ENCODE measurements at regions of chr21 and their contacts with region 1.

Region 1: GRCh38 chr21:33075128-33075527 is 5.2 kb downstream of the OLIG1 start:
- DNase-seq: no peak
- H3K4me3 ChIP-seq: no peak overlapping the region
- H3K27ac ChIP-seq: no peak overlapping the region
- H3K4me1 ChIP-seq: no peaks in the 10 kb centered on the region
- CTCF ChIP-seq: no peak

Region 2: GRCh38 chr21:32958288-32959002 is 116.7 kb before region 1 on chr21:
- CTCF ChIA-PET with region 1: interaction called, 10 read pairs
- POLR2A ChIA-PET with region 1: no interaction called
- intact Hi-C with region 1: no loop called
- DNase-seq: no peak
- H3K4me3 ChIP-seq: no peak overlapping the region
- H3K27ac ChIP-seq: no peak overlapping the region
- H3K4me1 ChIP-seq: no peaks in the 10 kb centered on the region
- CTCF ChIP-seq: no peak

Region 3: DNA sequence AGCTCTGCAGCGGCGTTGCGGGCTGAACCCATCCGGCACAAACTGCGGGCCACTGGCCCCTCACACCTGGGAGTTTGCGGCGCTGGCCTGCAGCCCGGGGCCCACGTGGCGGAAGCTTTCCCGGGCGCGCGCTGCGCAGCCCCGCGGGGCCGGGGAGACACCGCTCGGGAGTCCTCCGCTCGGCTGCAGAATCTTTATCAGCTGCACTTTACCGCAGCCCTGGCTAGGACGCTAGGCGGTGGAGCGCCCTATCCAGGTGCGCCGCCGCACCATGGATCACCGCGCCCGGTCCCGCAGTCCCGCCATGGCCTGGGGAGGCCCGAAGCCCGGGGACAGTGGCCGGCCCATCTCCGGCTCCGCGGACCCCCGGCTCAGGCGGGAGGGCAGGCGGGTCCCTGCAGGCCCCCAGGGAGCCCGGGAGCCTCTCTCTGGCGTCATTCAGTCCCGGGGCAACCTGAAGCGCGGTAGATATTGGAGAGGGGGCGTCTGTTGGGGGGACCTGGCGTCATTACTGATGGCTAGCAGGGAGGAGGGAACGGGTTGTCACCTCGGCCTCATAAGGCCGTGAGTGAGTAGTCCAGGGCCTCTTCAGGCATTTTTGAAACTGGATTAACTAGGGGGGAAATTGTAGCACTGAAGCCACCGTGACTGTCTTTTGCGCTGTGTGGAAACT is 55.1 kb before region 1 on chr21:
- CTCF ChIA-PET with region 1: no interaction called
- POLR2A ChIA-PET with region 1: no interaction called
- intact Hi-C with region 1: no loop called
- DNase-seq: no peak
- H3K4me3 ChIP-seq: no peak overlapping the region
- H3K27ac ChIP-seq: no peak overlapping the region
- H3K4me1 ChIP-seq: no peaks in the 10 kb centered on the region
- CTCF ChIP-seq: no peak